Endothelial cell of umbilical vein (primary cell): ENCODE measurements at regions of chr1 and their contacts with region 1.

Region 1: DNA sequence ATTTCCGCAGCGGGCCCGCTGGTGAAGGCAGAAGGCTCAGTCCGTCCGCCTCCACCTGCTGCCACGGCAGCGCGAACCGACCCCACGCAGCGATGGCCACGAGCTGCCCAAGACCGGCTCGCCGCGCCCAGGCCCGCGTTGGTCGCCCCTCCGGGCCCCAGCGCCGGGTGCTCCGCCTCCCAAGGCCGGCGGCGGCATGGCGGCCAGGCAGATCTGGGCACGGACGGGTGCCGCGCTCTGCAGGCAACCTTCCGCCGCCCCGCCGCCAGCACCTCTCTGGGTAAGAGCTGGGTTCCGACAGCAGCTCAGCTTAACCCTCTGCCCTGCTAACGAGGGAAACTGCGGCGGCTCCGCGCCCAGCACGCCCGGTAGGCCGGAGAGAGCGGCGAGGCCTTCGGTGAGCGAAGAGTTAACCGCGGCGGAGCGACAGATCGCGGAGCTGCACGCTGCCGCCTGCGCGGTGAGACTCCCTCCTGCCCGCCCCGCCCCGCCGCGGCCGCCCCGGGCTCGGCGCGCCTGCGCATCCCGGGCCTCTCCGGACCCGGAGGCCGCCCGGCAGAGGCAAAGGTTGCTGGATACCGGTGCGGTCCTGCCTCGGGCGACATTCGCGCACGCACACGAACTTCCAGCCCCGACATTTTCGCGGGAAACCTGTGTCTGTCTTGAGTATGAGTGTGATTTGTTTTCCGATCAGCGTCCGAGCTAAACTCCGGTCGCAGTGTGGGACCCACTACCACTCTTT is at the start of gene C1orf53:
- DNase-seq: peak; percentile 91
- H3K4me3 ChIP-seq: peak within 1 kb of the TSS; percentile 29 to 76 (median 65)
- H3K27ac ChIP-seq: peak within 1 kb of the TSS; percentile 52
- H3K4me1 ChIP-seq: peaks cover 14% of the 10 kb centered on the region
- H3K27me3 ChIP-seq: peaks cover 2 to 22% of the 10 kb centered on the region in 2 experiments
- CTCF ChIP-seq: no peak
- POLR2A ChIP-seq: peak; percentile 74
- total RNA-seq, gene C1orf53: 2.1 and 3.5 TPM in 2 replicates

Region 2: DNA sequence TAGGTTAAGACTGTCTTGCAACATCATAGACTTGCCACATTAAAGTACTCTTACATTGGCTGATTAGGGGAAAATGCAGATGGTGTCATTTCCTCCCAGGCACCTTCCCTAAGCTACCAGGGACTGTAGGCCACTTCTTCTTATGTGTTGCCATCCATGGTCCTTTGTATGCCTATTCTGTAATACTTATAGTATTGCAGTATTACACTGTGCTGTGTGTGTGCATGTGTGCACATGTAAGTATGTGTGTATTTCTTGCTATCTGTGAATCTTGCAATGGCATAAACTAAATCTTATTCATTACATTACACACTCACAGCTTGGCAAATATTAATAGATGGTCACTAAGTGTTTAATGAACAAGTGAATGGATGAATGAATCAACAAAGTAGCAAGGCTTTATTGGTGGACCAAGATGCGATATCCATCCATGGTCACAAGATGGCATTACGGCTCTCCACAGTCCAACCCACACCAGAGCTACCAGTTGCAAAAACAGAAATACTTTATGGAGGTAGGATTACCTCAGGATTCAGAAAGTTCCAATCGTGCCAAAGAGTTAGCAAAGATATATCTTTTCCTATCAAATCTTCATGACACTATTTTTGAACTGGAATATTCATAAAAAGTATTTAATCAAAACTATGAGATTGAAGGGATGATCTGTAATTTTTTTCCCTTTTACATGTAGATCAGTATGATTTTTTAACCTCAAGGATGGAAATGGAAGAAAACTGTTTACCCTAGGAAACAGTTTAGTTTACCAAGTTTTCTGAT is 287.5 kb before region 1 on chr1:
- CTCF ChIA-PET with region 1: interaction called, 17 read pairs
- POLR2A ChIA-PET with region 1: no interaction called
- dilution Hi-C with region 1: no loop called
- intact Hi-C with region 1: no loop called
- DNase-seq: peak; percentile 55
- H3K4me3 ChIP-seq: no peak overlapping the region
- H3K27ac ChIP-seq: no peak overlapping the region
- H3K4me1 ChIP-seq: no peaks in the 10 kb centered on the region
- H3K27me3 ChIP-seq: no peaks in the 10 kb centered on the region
- CTCF ChIP-seq: peak; percentile 51 to 57
- POLR2A ChIP-seq: no peak

Region 3: GRCh38 chr1:198107041-198107440 is 204.4 kb after region 1 on chr1:
- CTCF ChIA-PET with region 1: no interaction called
- POLR2A ChIA-PET with region 1: no interaction called
- dilution Hi-C with region 1: no loop called
- intact Hi-C with region 1: no loop called
- DNase-seq: no peak
- H3K4me3 ChIP-seq: no peak overlapping the region
- H3K27ac ChIP-seq: no peak overlapping the region
- H3K4me1 ChIP-seq: no peaks in the 10 kb centered on the region
- H3K27me3 ChIP-seq: no peaks in the 10 kb centered on the region
- CTCF ChIP-seq: no peak
- POLR2A ChIP-seq: no peak